CD8-positive, alpha-beta T cell (primary cell): ENCODE measurements at regions of chr14 and their contacts with region 1.

Region 1: DNA sequence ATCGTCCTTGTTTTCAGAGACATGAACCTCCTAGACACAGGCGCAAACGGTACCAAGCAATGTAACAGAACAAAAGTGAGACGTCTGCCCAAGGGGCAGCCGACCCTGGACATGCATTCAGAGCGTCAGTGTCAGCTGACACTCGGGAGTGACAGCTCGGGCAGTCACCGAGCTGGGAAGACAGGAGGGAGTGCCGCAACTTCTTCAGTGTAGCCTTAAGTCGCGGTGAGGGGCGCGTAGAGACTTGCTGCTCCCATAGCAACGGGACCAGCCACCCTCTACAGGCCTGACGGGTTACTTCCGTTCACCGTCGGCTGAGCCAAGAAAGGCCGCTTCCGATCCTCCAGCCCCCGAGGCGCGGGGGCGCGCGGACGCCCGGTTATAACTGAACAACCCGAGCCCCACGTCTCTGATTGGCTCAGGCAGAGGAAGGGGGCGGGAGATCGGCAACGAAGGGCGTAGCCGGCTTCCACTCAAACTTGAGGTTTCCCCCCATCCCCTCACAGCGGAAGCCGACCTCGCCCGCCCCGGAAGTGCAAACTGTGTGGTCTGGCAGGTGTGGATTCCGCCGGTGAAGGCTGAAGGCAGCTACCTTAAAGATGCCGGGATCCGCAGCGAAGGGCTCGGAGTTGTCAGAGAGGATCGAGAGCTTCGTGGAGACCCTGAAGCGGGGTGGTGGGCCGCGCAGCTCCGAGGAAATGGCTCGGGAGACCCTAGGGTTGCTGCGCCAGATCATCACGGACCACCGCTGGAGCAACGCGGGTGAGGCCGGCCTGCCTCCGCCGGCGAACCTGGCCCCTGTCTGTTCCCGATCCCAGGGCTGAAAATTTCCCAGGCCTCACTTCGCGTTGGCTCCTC is at the start of gene EIF2B2:
- DNase-seq: peak; percentile 98 to 99 (median 99)
- ATAC-seq: peak; percentile 96
- H3K4me3 ChIP-seq: peak within 1 kb of the TSS; percentile 81 to 94
- H3K4me3 Mint-ChIP-seq: peak within 1 kb of the TSS; percentile 97
- H3K27ac ChIP-seq: peak within 1 kb of the TSS; percentile 91 to 93
- H3K27ac Mint-ChIP-seq: peak within 1 kb of the TSS; percentile 97
- H3K4me1 ChIP-seq: peaks cover 19% of the 10 kb centered on the region
- H3K4me1 Mint-ChIP-seq: peaks cover 43% of the 10 kb centered on the region
- H3K27me3 ChIP-seq: no peaks in the 10 kb centered on the region
- H3K27me3 Mint-ChIP-seq: no peaks in the 10 kb centered on the region
- CTCF ChIP-seq: no peak
- total RNA-seq, gene EIF2B2: 19.8 to 20.6 TPM

Region 2: DNA sequence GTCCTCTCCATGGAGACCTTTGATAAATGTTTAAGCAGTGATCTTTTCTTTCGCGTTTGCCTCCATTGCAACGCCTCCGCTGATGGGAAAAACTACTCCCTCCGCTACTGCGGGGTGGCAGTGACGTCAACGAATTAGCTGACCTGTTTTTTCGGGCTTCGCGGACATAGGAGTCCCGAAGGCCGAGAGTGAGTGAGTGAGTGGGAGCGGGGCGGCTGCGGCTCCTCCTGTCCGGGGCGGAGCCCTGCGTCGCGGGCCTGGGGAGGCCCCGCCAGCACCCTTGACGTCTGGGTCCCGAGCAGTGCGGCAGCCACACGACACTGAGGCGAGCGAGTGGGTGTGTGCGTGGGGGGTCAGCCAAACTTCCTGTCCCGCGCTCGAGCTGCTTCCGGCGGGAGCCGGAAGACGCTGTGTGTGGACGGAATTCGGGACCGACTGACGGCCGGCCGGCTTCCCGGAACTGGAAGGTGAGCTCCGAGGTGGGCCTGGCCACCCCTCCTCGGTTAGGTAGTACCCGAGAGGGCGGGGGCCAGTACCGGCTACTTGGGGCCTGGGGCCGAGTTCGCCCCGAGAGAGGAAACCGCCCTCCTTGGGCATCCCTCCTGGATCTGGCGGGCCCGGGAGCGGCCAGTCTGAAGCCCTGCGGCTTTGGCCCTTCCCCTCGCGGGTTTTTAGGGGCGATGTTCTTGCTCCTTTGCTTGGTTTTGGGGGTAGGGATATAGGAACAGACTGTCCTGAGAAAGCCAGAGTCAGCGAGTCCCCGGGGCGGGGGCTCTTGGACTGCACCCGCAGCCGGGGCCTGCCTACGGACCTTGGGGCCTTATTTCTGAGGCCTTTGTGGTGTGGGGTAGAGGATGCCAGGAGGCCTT is 1115.9 kb before region 1 on chr14 and contains the start of gene ZNF410:
- CTCF ChIA-PET with region 1: no interaction called
- POLR2A ChIA-PET with region 1: no interaction called
- intact Hi-C with region 1: loop called in 1 of 2 experiments (anchors 5 kb)
- DNase-seq: peak; percentile 70 to 95 (median 85)
- ATAC-seq: peak; percentile 98
- H3K4me3 ChIP-seq: peak within 1 kb of the TSS; percentile 90
- H3K4me3 Mint-ChIP-seq: peak within 1 kb of the TSS; percentile 98
- H3K27ac ChIP-seq: peak within 1 kb of the TSS; percentile 91 to 99
- H3K27ac Mint-ChIP-seq: peak within 1 kb of the TSS; percentile 99
- H3K4me1 ChIP-seq: peaks cover 19% of the 10 kb centered on the region
- H3K4me1 Mint-ChIP-seq: peaks cover 46% of the 10 kb centered on the region
- H3K27me3 ChIP-seq: no peaks in the 10 kb centered on the region
- H3K27me3 Mint-ChIP-seq: no peaks in the 10 kb centered on the region
- CTCF ChIP-seq: no peak
- total RNA-seq, gene ZNF410: 86.6 to 89.2 TPM

Region 3: GRCh38 chr14:74712499-74713394 is 289.9 kb before region 1 on chr14 and contains the starts of genes AREL1 and FCF1:
- CTCF ChIA-PET with region 1: no interaction called
- POLR2A ChIA-PET with region 1: no interaction called
- intact Hi-C with region 1: loop called in 1 of 2 experiments (anchors 2 kb)
- DNase-seq: peak; percentile 56 to 94 (median 80)
- ATAC-seq: peak; percentile 93
- H3K4me3 ChIP-seq: peak within 1 kb of the TSS; percentile 63 to 87
- H3K4me3 Mint-ChIP-seq: peak within 1 kb of the TSS; percentile 98
- H3K27ac ChIP-seq: peak within 1 kb of the TSS; percentile 78 to 93
- H3K27ac Mint-ChIP-seq: peak within 1 kb of the TSS; percentile 99
- H3K4me1 ChIP-seq: peaks cover 24% of the 10 kb centered on the region
- H3K4me1 Mint-ChIP-seq: peaks cover 65% of the 10 kb centered on the region
- H3K27me3 ChIP-seq: no peaks in the 10 kb centered on the region
- H3K27me3 Mint-ChIP-seq: no peaks in the 10 kb centered on the region
- CTCF ChIP-seq: no peak
- total RNA-seq, gene AREL1: 44.5 to 60.1 TPM
- total RNA-seq, gene FCF1: 32.6 to 34.0 TPM

Region 4: GRCh38 chr14:74945823-74946682 is 56.6 kb before region 1 on chr14:
- CTCF ChIA-PET with region 1: interaction called, 3 read pairs
- POLR2A ChIA-PET with region 1: interaction called, 3 read pairs
- intact Hi-C with region 1: loop called in 1 of 2 experiments (anchors 5 kb)
- DNase-seq: peak; percentile 49 to 83 (median 76)
- ATAC-seq: peak; percentile 83
- H3K4me3 ChIP-seq: no peak overlapping the region
- H3K4me3 Mint-ChIP-seq: peak overlapping the region; percentile 18
- H3K27ac ChIP-seq: no peak overlapping the region
- H3K27ac Mint-ChIP-seq: no peak overlapping the region
- H3K4me1 ChIP-seq: peaks cover 30% of the 10 kb centered on the region
- H3K4me1 Mint-ChIP-seq: peaks cover 26% of the 10 kb centered on the region
- H3K27me3 ChIP-seq: no peaks in the 10 kb centered on the region
- H3K27me3 Mint-ChIP-seq: peaks cover 3% of the 10 kb centered on the region
- CTCF ChIP-seq: peak; percentile 84

Region 5: GRCh38 chr14:74979442-74980361 is 22.9 kb before region 1 on chr14:
- CTCF ChIA-PET with region 1: no interaction called
- POLR2A ChIA-PET with region 1: no interaction called
- intact Hi-C with region 1: no loop called
- DNase-seq: no peak
- ATAC-seq: no peak
- H3K4me3 ChIP-seq: no peak overlapping the region
- H3K4me3 Mint-ChIP-seq: no peak overlapping the region
- H3K27ac ChIP-seq: no peak overlapping the region
- H3K27ac Mint-ChIP-seq: no peak overlapping the region
- H3K4me1 ChIP-seq: no peaks in the 10 kb centered on the region
- H3K4me1 Mint-ChIP-seq: no peaks in the 10 kb centered on the region
- H3K27me3 ChIP-seq: peaks cover 0 to 2% of the 10 kb centered on the region in 2 experiments
- H3K27me3 Mint-ChIP-seq: no peaks in the 10 kb centered on the region
- CTCF ChIP-seq: no peak

Region 6: DNA sequence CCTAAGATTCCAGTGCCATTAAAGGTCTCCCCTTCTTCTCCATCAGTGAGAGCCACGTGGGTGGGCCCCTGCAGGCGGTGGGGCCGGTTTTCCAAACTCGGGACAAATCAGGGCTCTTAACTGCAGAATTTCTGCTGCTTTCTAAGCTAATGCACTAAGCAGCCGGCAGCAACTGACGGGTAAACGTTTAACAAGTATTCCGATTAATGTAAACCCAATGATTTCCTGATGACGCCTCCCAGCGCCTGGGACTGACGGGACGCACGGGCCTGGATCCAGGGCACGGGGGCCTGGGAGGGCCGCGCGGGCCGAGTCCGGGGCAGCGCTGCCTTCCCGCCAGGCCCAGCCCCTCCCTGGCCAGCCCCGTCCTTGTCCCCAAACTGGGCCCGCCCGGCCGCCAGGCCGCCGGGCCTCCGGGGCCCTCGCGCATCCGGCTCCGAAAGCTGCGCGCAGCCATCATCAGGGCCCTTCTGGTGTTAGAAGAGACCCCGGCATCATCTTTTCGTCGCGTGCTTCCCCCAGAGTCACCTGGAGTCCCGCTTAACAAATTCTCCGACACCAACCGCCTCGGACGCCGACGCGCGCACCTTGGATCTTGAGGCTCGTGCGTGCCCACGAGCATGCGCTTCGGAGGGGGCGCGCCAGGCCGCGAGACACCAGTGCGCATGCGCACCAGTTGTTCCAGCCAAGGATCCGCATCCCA is 48.4 kb after region 1 on chr14 and contains the start of gene MLH3:
- CTCF ChIA-PET with region 1: no interaction called
- POLR2A ChIA-PET with region 1: no interaction called
- intact Hi-C with region 1: loop called (anchors 1 kb)
- DNase-seq: peak; percentile 65 to 92 (median 81)
- ATAC-seq: peak; percentile 80
- H3K4me3 ChIP-seq: peak within 1 kb of the TSS; percentile 67 to 85
- H3K4me3 Mint-ChIP-seq: peak within 1 kb of the TSS; percentile 94
- H3K27ac ChIP-seq: peak within 1 kb of the TSS; percentile 62 to 77
- H3K27ac Mint-ChIP-seq: peak within 1 kb of the TSS; percentile 96
- H3K4me1 ChIP-seq: peaks cover 15% of the 10 kb centered on the region
- H3K4me1 Mint-ChIP-seq: peaks cover 45% of the 10 kb centered on the region
- H3K27me3 ChIP-seq: no peaks in the 10 kb centered on the region
- H3K27me3 Mint-ChIP-seq: no peaks in the 10 kb centered on the region
- CTCF ChIP-seq: no peak
- total RNA-seq, gene MLH3: 8.5 to 12.2 TPM

Region 7: GRCh38 chr14:75176142-75176820 is 173.7 kb after region 1 on chr14 and contains the start of gene TMED10:
- CTCF ChIA-PET with region 1: no interaction called
- POLR2A ChIA-PET with region 1: no interaction called
- intact Hi-C with region 1: loop called (anchors 1 kb)
- DNase-seq: peak; percentile 85 to 95 (median 93)
- ATAC-seq: peak; percentile 76
- H3K4me3 ChIP-seq: peak within 1 kb of the TSS; percentile 80 to 94
- H3K4me3 Mint-ChIP-seq: peak within 1 kb of the TSS; percentile 91
- H3K27ac ChIP-seq: peak within 1 kb of the TSS; percentile 98
- H3K27ac Mint-ChIP-seq: peak within 1 kb of the TSS; percentile 98
- H3K4me1 ChIP-seq: peaks cover 23% of the 10 kb centered on the region
- H3K4me1 Mint-ChIP-seq: peaks cover 44% of the 10 kb centered on the region
- H3K27me3 ChIP-seq: no peaks in the 10 kb centered on the region
- H3K27me3 Mint-ChIP-seq: no peaks in the 10 kb centered on the region
- CTCF ChIP-seq: no peak
- total RNA-seq, gene TMED10: 126 to 129 TPM

Region 8: GRCh38 chr14:75660630-75661494 is 658.2 kb after region 1 on chr14 and contains the starts of genes ERG28 and TTLL5:
- CTCF ChIA-PET with region 1: no interaction called
- POLR2A ChIA-PET with region 1: no interaction called
- intact Hi-C with region 1: loop called (anchors 2 to 5 kb)
- DNase-seq: peak; percentile 94 to 99 (median 95)
- ATAC-seq: peak; percentile 93
- H3K4me3 ChIP-seq: peak within 1 kb of the TSS; percentile 86 to 87
- H3K4me3 Mint-ChIP-seq: peak within 1 kb of the TSS; percentile 98
- H3K27ac ChIP-seq: peak within 1 kb of the TSS; percentile 85 to 93
- H3K27ac Mint-ChIP-seq: peak within 1 kb of the TSS; percentile 97
- H3K4me1 ChIP-seq: peaks cover 10% of the 10 kb centered on the region
- H3K4me1 Mint-ChIP-seq: peaks cover 36% of the 10 kb centered on the region
- H3K27me3 ChIP-seq: no peaks in the 10 kb centered on the region
- H3K27me3 Mint-ChIP-seq: no peaks in the 10 kb centered on the region
- CTCF ChIP-seq: no peak
- total RNA-seq, gene ERG28: 6.6 to 6.7 TPM
- total RNA-seq, gene TTLL5: 17.6 to 17.7 TPM

Region 9: DNA sequence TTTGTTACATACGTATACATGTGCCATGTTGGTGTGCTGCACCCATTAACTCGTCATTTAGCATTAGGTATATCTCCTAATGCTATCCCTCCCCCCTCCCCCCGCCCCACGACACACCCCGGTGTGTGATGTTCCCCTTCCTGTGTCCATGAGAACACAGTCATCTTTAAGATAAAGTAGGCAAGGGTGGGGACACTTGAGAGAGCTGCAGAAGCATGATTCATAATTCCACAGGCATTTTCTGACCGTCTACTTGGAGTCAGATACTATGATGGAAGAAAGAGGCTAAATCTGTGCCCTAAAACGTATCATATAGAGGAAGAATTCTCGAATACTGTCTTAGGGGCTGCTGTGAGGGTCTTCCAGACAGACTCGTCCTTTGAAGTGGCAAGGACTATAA is 1612.7 kb after region 1 on chr14:
- CTCF ChIA-PET with region 1: no interaction called
- POLR2A ChIA-PET with region 1: no interaction called
- intact Hi-C with region 1: no loop called
- DNase-seq: no peak
- ATAC-seq: no peak
- H3K4me3 ChIP-seq: no peak overlapping the region
- H3K4me3 Mint-ChIP-seq: no peak overlapping the region
- H3K27ac ChIP-seq: no peak overlapping the region
- H3K27ac Mint-ChIP-seq: no peak overlapping the region
- H3K4me1 ChIP-seq: no peaks in the 10 kb centered on the region
- H3K4me1 Mint-ChIP-seq: no peaks in the 10 kb centered on the region
- H3K27me3 ChIP-seq: no peaks in the 10 kb centered on the region
- H3K27me3 Mint-ChIP-seq: peaks cover 5% of the 10 kb centered on the region
- CTCF ChIP-seq: no peak